ENCODE measurements at regions of chr21 and their contacts with region 1.

Region 1: DNA sequence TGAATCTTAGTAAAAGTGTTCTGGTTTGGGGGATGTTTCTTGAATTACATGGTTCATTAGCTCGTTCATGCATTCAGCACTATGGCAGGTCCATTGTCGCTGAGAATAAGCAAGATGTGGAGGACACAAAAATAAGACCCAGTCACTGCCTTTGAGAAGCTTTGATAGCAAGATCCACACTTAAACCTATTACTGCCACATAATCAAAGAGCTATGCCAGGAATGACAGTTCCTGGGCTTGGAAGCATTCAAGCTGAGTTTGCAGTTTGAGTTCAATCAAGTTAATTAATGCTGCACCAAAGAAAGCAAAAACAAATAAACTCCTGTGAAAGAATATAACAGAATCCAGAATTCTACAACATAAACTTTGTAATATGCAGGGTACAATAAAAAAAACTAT is 131.8 kb downstream of the MIS18A start:
- DNase-seq: no peak
- ATAC-seq: no peak
- H3K4me3 ChIP-seq: no peak overlapping the region
- H3K27ac ChIP-seq: no peak overlapping the region
- H3K4me1 ChIP-seq: peaks cover 0 to 14% (median 0%) of the 10 kb centered on the region in 9 donors
- H3K27me3 ChIP-seq: no peaks in the 10 kb centered on the region
- CTCF ChIP-seq: no peak

Region 2: DNA sequence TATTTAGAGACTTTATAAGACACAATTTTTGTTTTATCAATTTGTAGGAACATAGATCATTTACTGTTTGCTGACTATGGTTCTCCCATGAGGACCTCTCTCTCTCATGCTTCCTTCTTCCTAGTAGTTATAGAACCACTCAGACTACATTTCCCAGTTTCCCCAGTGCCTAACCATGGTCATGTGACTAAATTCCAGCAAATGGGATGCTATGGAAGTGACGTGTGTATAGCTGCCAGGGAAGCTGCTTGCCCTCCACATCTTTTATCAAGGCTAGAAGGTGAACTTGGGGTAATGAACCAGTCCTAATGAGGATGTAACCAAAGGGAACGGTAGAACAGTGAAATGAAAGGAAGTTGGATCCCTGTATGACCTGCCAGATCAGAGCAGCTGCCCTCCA is 52.2 kb before region 1 on chr21:
- intact Hi-C with region 1: no loop called
- DNase-seq: no peak
- ATAC-seq: peak in 4 of 8 donors; percentile 46 to 79 (median 55)
- H3K4me3 ChIP-seq: peak overlapping the region in 1 of 10 donors; percentile 14
- H3K27ac ChIP-seq: no peak overlapping the region
- H3K4me1 ChIP-seq: peaks cover 0 to 5% (median 0%) of the 10 kb centered on the region in 9 donors
- H3K27me3 ChIP-seq: no peaks in the 10 kb centered on the region
- CTCF ChIP-seq: no peak

Region 3: DNA sequence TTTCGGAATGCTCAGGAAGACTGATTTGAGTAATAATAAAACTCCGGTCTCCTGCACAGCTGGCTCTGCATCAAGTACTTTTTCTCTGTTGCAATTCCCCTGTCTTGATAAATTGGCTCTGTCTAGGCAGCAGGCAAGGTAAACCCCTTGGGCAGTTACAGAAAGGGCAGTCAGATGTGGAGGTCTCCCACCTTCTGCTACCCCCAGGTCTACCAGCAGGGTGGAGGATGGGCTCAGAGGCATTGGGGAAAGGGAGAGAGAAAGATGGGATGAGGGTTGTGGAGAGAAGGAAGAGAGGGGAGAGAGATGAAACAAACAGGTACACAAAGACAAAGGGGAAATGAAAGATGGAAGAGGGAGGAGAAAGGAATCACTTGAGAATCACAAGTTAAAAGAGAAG is 25.0 kb before region 1 on chr21:
- intact Hi-C with region 1: loop called in 1 of 10 experiments (anchors 2 kb)
- DNase-seq: no peak
- ATAC-seq: no peak
- H3K4me3 ChIP-seq: no peak overlapping the region
- H3K27ac ChIP-seq: no peak overlapping the region
- H3K4me1 ChIP-seq: no peaks in the 10 kb centered on the region
- H3K27me3 ChIP-seq: no peaks in the 10 kb centered on the region
- CTCF ChIP-seq: no peak

Region 4: GRCh38 chr21:32597205-32597604 is 450.2 kb after region 1 on chr21:
- intact Hi-C with region 1: no loop called
- DNase-seq: no peak
- ATAC-seq: no peak
- H3K4me3 ChIP-seq: no peak overlapping the region
- H3K27ac ChIP-seq: no peak overlapping the region
- H3K4me1 ChIP-seq: peaks cover 0 to 4% (median 0%) of the 10 kb centered on the region in 9 donors
- H3K27me3 ChIP-seq: no peaks in the 10 kb centered on the region
- CTCF ChIP-seq: no peak